Right ventricle myocardium inferior (tissue), 1 donor: ENCODE measurements at regions of chr19 and their contacts with region 1.

Region 1: DNA sequence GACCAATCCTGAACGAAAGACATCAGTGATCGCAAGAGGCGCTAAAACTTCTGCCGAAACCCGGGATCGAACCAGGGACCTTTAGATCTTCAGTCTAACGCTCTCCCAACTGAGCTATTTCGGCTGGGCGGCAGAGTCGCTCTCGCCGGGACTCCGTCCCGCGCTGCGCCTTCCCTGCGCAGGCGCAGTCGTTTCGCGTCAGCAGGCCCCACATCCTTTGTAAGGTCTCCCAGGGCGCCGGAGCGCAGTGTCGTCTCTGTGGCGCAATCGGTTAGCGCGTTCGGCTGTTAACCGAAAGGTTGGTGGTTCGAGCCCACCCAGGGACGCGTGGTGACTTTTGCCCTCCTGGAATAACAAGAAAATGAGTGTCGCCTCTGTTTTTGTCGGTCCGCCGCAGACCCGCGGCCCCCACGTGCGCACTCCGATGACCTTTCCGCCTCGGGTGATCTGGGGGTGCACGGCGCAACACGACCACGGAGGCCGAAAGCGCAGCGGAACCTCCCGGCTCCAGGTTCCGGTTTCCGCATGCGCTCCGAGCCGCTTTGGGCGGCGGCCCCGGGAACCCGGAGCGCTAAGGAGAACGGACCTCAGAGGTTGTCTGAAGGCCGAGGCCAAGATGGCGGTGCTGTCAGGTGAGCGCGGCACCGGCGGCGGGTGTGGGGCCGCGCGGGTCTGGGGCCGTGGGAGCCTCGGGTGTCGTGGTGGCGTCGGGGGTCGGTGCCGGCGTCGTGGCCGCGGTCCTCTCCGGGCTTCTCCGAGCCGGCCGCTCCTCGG is at the start of gene NDUFS7:
- DNase-seq: peak; percentile 93
- ATAC-seq: peak; percentile 90
- total RNA-seq, gene NDUFS7: 443 TPM

Region 2: DNA sequence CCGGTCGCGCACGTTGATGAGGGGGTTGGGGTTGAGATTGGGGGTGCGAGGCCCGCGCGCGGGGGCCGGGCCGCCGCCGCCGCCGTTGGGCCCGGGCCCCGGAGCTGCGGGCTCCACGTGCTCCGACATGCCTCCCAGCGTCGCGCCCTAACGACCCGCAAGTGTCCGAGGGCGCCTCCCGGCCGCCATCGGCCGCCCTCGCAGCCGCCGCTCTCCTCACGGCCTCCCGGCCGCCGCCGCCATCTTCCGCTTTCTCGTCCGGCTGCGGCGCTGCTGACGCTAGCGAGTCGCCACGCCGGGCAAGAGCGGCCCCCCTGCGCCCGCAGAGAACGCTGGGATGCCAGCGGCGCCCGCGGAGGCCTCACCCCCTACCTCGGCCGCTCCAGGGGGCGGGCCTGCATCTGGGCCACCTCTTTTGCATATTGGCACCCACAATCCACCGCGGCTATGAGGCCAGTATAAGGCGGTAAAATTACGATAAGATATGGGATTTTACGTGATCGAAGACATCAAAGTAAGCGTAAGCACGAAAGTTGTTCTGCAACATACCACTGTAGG is 362.6 kb before region 1 on chr19 and contains the start of gene TMEM259:
- intact Hi-C with region 1: loop called (anchors 10 kb)
- DNase-seq: peak; percentile 99
- ATAC-seq: peak; percentile 94
- total RNA-seq, gene TMEM259: 106 TPM

Region 3: GRCh38 chr19:1241417-1242095 is 141.9 kb before region 1 on chr19 and contains the start of gene ATP5F1D:
- intact Hi-C with region 1: loop called (anchors 1 kb)
- DNase-seq: peak; percentile 97
- ATAC-seq: peak; percentile 64
- total RNA-seq, gene ATP5F1D: 656 TPM

Region 4: DNA sequence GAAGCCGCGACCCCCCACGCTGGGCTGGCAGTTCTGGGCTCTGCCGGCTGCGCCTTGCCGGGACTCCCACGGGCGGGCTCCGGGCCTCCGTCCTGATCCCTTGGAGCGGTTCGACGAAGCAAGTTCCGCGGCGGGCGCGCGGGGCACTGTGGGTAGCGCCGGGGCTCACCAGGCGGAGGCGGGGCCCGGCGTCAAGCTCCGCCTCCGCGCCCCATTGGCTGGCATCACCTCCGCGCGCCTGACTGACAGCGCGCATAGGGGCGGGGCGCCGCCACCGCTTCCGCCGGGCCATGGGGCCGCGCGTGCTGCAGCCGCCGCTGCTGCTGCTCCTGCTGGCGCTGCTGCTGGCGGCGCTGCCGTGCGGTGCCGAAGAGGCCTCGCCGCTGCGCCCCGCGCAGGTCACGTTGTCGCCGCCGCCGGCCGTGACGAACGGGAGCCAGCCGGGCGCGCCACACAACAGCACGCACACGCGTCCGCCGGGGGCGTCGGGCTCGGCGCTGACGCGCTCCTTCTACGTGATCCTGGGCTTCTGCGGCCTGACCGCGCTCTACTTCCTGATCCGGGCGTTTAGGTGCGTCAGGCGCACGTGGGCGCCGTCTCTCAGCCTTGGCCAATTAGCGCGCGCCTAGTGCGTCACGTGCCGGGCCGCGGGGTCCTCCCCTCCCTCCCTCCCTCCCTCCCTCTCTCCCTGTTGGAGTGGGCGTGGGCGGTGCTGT is 108.1 kb before region 1 on chr19 and contains the start of gene FAM174C:
- intact Hi-C with region 1: loop called (anchors 5 kb)
- DNase-seq: peak; percentile 97
- ATAC-seq: peak; percentile 88
- total RNA-seq, gene FAM174C: 13.1 TPM

Region 5: GRCh38 chr19:1336079-1336684 is 47.3 kb before region 1 on chr19:
- intact Hi-C with region 1: no loop called
- DNase-seq: no peak
- ATAC-seq: no peak

Region 6: DNA sequence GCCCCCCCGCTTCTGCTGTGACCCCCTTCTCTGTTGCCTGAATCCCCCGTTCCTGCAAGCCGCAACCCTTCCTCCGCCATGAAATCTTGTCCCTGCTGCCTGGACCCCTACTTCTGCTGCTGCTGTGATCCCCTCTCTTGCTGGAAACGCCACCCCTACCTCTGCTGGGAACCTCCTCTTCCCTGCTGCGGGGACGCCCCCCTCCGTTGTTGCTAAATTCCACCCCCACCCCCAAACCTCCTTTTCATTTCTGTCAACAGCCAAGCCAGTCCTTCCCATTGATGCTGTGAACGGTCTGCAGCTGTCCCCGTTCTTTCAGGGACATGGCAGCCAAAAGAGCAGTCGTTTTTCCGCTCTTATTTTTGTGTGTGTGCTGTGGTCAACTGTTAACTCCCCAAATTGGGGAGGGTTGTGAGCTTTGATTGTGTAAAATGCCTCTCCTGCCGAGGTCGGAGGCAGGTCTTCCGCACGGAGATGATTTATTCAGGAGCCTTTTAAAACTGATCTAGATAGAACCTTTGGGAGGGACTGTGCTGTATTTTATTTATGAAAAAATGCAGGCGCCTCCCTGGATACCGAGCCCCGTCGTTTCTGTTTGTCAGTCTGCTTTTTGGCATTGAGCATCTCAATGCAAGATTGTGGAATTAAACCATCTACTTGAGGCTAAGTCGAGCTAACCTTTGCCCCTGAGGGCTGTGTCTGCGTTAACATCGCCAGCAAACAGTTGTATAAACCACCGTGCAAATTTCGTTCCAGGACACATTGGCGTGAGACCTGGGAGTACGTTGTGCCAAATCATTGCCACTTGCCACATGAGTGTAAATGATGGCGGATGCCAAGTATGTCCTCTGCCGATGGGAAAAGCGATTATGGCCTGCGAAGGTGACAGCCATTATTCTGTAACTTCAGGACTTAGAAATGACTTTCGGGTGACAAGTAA is 27.7 kb before region 1 on chr19:
- intact Hi-C with region 1: loop called (anchors 2 kb)
- DNase-seq: peak; percentile 1
- ATAC-seq: no peak

Region 7: DNA sequence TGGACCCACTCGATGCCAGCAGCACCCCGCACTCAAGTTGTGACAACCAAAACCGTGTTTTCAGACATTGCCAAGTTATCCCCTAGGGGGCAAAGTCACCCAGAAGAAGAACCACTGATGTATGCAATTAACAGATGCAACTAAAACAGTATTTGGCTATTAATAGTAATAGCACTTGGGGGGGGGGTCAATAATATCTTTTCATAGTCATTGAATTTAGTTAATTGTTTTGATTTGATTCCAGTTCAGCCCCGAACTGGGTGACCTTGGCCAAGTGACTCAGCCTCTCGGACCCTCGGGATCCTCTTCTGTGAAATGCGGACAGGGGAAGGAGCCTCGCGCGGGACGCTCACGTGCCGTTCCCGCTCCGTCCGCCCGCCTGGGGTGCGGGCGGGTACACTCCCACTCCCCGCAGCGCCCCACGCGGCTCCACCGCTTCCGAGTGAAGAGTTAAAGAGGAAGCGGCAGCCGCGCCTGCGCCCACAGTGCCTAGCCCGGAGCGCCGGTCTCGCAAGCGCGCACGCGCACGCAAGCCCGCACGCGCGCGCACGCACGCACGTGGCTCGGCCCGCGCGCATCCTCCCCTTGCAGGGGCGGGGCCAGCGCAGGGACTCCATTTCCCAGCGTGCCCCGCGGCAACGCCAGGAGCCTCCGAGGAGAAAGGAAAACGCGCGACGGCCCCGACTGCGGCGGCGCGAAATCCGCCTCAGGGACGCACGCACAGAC is 23.4 kb after region 1 on chr19:
- intact Hi-C with region 1: loop called (anchors 1 kb)
- DNase-seq: peak; percentile 100
- ATAC-seq: peak; percentile 93

Region 8: DNA sequence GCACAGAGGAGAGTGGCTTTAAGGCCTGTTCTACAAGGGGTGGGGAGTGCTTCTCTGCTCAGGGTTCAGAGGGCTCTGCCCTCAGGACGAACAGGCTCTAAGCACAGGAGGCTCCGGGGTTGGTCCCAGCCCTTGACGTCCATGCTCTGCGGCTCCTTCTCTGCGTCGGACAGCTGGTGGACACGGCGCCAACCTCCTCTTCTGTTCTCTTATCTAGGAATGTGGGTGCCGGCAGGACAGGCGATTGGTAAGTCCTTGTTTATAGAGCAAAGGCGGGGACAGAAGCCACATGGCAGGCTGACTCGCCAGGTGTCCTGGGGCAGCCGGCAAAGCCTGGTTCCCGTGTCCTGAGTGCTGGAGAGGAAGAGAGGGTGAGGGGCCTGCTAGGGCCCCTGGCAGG is 46.3 kb after region 1 on chr19:
- intact Hi-C with region 1: no loop called
- DNase-seq: no peak
- ATAC-seq: peak; percentile 82